ENCODE measurements at regions of chr16 and their contacts with region 1.

Region 1: DNA sequence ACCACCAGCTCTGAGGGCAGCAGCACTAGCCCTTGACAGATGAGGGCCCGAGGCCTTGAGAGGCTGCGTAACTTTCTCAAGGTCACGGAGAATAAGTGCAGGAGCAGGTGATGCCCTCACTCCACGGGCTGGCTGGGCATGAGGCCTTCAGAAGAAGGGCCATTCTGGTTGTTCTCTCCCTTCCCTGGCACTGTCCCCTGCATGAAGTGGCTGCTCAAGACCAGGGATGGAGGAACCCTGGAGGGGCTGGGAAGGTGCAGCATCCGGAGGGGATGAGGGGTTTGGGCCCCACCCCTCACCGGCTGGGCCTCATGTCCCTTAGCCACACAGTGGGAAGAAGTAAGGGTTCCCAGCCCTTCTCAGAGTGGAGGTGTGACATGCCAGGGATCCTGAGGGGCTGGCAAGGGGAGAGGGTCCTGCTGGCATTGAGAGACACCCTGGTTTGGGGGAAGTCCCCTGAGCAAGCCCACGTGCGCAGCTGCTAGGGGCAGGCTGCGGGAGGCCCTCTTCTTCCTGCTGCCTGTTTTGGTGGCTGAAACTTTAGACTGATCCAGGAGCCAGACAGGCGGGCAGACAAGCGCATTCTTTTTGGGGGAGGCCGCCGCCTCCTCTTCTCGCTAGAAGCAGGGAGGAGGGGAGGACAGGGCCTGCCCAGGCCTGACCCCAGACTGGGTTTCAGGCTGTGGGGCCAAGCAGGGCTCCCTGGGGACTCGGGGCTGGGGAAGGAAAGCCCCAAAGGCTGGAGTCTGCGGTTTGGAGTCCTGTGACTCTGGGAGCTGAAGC is 74.0 kb downstream of the N4BP1 start:
- DNase-seq: peak in 1 of 2 donors; percentile 78
- ATAC-seq: peak; percentile 50 to 63
- H3K4me3 ChIP-seq: no peak overlapping the region
- H3K27ac ChIP-seq: peak overlapping the region; percentile 62 to 83 (median 71)
- H3K4me1 ChIP-seq: peaks cover 45 to 50% of the 10 kb centered on the region in 2 donors
- H3K27me3 ChIP-seq: no peaks in the 10 kb centered on the region
- CTCF ChIP-seq: no peak
- POLR2A ChIP-seq: no peak

Region 2: GRCh38 chr16:48459167-48459566 is 76.9 kb before region 1 on chr16:
- in situ Hi-C with region 1: no loop called
- intact Hi-C with region 1: loop called (anchors 5 kb)
- DNase-seq: no peak
- ATAC-seq: no peak
- H3K4me3 ChIP-seq: no peak overlapping the region
- H3K27ac ChIP-seq: peak overlapping the region in 3 of 4 donors; percentile 1 to 50 (median 39)
- H3K4me1 ChIP-seq: peaks cover 0 to 7% of the 10 kb centered on the region in 2 donors
- H3K27me3 ChIP-seq: no peaks in the 10 kb centered on the region
- CTCF ChIP-seq: no peak
- POLR2A ChIP-seq: no peak

Region 3: DNA sequence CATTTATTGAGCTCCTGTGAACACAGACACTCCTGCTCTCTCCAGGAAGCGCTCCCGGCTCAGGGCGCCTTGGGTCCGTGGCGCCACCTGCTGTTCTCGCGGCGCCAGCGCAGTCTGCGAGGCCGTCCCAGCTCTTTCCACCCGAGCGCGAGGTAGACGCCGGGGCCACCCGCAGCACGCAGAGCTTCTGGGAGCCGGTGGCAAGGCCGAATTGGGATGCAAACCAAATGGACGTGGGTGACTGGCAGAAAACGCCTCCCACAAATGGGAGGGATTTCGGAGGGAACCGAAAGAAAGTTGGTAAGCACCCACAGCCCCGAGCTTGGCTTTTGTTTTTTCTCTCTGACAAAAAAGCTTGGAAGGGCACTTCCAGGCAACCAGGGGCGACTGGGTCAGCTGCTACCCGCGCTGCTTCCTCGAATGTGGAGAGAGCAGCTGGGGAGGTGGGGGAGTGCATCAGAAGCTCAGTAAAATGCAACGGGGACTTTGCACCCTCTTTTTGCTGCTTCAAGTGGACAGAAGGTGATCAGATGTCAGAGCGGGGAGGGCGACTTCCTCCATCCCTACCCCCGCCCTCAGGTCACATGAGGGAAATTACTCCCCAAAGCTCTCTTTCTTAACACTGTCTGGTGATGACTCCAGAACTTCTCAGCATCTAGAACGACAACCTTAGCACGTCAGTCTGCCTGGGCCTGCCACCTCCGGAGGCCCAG is 87.4 kb after region 1 on chr16:
- in situ Hi-C with region 1: no loop called
- intact Hi-C with region 1: loop called (anchors 1 kb)
- DNase-seq: peak; percentile 60 to 66
- ATAC-seq: peak; percentile 95
- H3K4me3 ChIP-seq: peak overlapping the region; percentile 57 to 64 (median 60)
- H3K27ac ChIP-seq: peak overlapping the region; percentile 63 to 76 (median 66)
- H3K4me1 ChIP-seq: peaks cover 4 to 15% of the 10 kb centered on the region in 2 donors
- H3K27me3 ChIP-seq: no peaks in the 10 kb centered on the region
- CTCF ChIP-seq: peak; percentile 93 to 99 (median 96)
- POLR2A ChIP-seq: peak in 1 of 2 donors; percentile 14

Measured in gastrocnemius medialis (tissue), 4 donors.